ENCODE measurements at regions of chr2 and their contacts with region 1.

Region 1: DNA sequence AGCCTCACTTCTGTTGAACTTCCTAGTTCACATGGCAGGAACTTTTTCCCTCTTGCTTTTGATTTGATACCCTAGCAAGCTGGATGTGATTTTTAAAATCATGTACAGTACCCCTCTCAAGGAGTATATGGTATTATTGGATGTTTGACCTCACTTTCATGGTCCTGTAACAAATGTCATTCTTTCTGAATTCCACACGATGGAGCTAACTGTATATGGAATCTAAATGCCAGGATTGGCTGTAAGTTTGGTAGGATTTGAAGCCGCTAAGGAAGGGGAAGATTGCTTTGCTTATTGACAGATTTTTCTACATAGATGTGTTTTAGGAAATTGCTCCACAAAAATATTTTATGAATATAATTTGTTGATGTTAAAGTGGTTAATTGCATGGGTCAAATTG is 18.3 kb downstream of the MAIP1 start:
- DNase-seq: no peak
- ATAC-seq: no peak
- H3K4me3 ChIP-seq: no peak overlapping the region
- H3K4me3 Mint-ChIP-seq: no peak overlapping the region
- H3K27ac ChIP-seq: no peak overlapping the region
- H3K27ac Mint-ChIP-seq: no peak overlapping the region
- H3K4me1 ChIP-seq: no peaks in the 10 kb centered on the region
- H3K4me1 Mint-ChIP-seq: peaks cover 0 to 3% (median 1%) of the 10 kb centered on the region in 3 donors
- H3K27me3 ChIP-seq: no peaks in the 10 kb centered on the region
- H3K27me3 Mint-ChIP-seq: no peaks in the 10 kb centered on the region

Region 2: DNA sequence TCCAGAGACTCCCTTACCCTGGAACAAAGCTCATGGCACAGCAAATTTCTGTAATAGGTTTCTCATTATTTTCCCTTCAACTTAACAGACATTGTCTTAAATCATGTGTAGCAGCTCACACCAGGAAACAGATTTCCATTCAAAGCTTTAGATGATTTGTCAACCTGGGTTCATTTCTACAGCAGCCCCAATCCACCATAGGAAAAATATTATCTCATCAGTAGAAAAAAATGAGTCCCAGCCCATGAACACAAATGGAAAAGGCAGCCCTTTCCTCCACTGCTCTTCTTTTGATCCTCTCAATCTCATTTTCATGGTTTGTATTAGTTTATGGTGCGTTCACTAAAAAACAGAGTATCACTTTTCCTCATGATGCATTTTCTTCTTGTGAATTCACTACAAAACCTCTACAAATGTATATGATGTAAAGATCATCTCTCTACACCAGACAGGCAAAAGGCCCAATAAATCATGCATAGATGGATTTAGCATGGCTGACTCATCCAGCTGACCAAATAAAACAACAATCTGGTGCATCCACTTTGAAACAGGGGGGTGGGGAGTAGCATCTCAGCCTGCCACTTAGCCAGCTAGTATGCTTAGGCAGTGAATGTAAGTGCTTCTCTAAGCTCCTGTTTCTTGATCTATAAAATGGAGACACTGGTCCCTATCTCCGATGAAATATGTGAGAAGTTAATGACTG is 594.6 kb before region 1 on chr2:
- CTCF ChIA-PET with region 1: no interaction called
- POLR2A ChIA-PET with region 1: no interaction called
- DNase-seq: no peak
- ATAC-seq: no peak
- H3K4me3 ChIP-seq: no peak overlapping the region
- H3K4me3 Mint-ChIP-seq: no peak overlapping the region
- H3K27ac ChIP-seq: no peak overlapping the region
- H3K27ac Mint-ChIP-seq: no peak overlapping the region
- H3K4me1 ChIP-seq: no peaks in the 10 kb centered on the region
- H3K4me1 Mint-ChIP-seq: no peaks in the 10 kb centered on the region
- H3K27me3 ChIP-seq: peaks cover 0 to 10% of the 10 kb centered on the region in 2 experiments
- H3K27me3 Mint-ChIP-seq: peaks cover 7 to 35% of the 10 kb centered on the region in 2 donors

Region 3: GRCh38 chr2:199955007-199955338 is 18.7 kb before region 1 on chr2:
- CTCF ChIA-PET with region 1: no interaction called
- POLR2A ChIA-PET with region 1: no interaction called
- DNase-seq: peak in 1 of 35 experiments; percentile 12
- ATAC-seq: peak; percentile 25 to 46 (median 32)
- H3K4me3 ChIP-seq: peak overlapping the region; percentile 81 to 98
- H3K4me3 Mint-ChIP-seq: peak overlapping the region; percentile 97 to 99 (median 98)
- H3K27ac ChIP-seq: peak overlapping the region; percentile 65
- H3K27ac Mint-ChIP-seq: peak overlapping the region; percentile 90 to 95
- H3K4me1 ChIP-seq: peaks cover 22 to 28% of the 10 kb centered on the region in 2 experiments
- H3K4me1 Mint-ChIP-seq: peaks cover 45 to 70% (median 67%) of the 10 kb centered on the region in 3 donors
- H3K27me3 ChIP-seq: no peaks in the 10 kb centered on the region
- H3K27me3 Mint-ChIP-seq: no peaks in the 10 kb centered on the region

Region 4: GRCh38 chr2:201466050-201466675 is 1492.5 kb after region 1 on chr2:
- CTCF ChIA-PET with region 1: no interaction called
- POLR2A ChIA-PET with region 1: interaction called in 1 of 2 experiments, 12 read pairs
- DNase-seq: no peak
- ATAC-seq: no peak
- H3K4me3 ChIP-seq: no peak overlapping the region
- H3K4me3 Mint-ChIP-seq: no peak overlapping the region
- H3K27ac ChIP-seq: no peak overlapping the region
- H3K27ac Mint-ChIP-seq: no peak overlapping the region
- H3K4me1 ChIP-seq: no peaks in the 10 kb centered on the region
- H3K4me1 Mint-ChIP-seq: peaks cover 2 to 19% (median 4%) of the 10 kb centered on the region in 3 donors
- H3K27me3 ChIP-seq: no peaks in the 10 kb centered on the region
- H3K27me3 Mint-ChIP-seq: no peaks in the 10 kb centered on the region

Measured in T-cell (primary cell).